HAP-1 (cell line): ENCODE measurements at regions of chr1 and their contacts with region 1.

Region 1: DNA sequence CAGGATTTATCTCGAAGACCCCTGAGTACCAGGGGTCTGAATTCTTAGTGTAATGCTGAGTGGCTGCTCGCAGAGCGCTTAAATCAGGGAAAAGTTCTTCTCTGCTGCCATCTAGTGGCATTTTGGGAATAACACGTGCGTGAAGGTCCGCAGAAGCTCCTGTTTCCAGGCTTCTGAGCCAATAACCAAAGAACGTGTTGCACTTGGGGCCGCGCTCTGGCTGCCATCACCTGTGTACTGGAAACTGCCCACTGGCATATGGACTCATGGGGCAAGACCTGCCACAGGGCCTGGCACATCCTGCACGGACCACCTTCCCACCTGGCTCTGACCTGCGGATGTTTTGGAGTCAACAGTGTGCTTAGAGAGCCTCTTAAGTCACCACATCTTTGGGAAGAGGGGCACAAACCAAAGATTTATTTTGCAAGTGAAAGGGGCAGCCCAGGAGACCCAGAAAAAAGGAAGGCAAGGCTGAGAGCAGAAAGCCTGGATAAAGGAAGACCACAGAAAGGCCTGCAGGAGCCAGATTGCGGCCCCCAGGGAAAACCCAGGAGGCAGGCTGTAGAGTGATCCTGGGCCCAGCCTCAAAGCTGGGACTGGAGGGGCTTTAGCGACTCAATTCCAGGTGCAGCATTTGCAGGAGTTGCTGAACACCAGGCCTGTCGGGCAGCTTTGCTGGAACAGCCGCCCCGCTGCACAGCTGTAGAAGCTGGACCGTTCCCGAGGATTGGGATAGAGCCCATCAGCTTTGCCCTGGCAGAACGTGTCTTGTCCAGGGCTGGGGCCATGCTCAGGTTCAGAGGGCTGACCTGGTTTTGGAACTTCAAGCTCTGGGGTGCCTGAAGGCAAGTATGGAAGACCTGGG is 13.0 kb downstream of the CHIT1 start:
- DNase-seq: peak; percentile 60 to 76
- H3K4me3 ChIP-seq: no peak overlapping the region
- H3K4me1 ChIP-seq: no peaks in the 10 kb centered on the region
- H3K27me3 ChIP-seq: peaks cover 20% of the 10 kb centered on the region; the same call in 1 of the 2 replicates

Region 2: GRCh38 chr1:202692959-202693555 is 523.4 kb before region 1 on chr1:
- in situ Hi-C with region 1: no loop called
- DNase-seq: peak; percentile 34 to 88
- H3K4me3 ChIP-seq: no peak overlapping the region
- H3K4me1 ChIP-seq: no peaks in the 10 kb centered on the region
- H3K27me3 ChIP-seq: peaks cover 7% of the 10 kb centered on the region

Region 3: GRCh38 chr1:202765721-202766120 is 450.8 kb before region 1 on chr1:
- in situ Hi-C with region 1: no loop called
- DNase-seq: no peak
- H3K4me3 ChIP-seq: no peak overlapping the region
- H3K4me1 ChIP-seq: no peaks in the 10 kb centered on the region
- H3K27me3 ChIP-seq: no peaks in the 10 kb centered on the region

Region 4: GRCh38 chr1:203038891-203039608 is 177.5 kb before region 1 on chr1:
- in situ Hi-C with region 1: loop called (anchors 5 kb)
- DNase-seq: peak; percentile 74 to 86
- H3K4me3 ChIP-seq: no peak overlapping the region
- H3K4me1 ChIP-seq: no peaks in the 10 kb centered on the region
- H3K27me3 ChIP-seq: no peaks in the 10 kb centered on the region

Region 5: DNA sequence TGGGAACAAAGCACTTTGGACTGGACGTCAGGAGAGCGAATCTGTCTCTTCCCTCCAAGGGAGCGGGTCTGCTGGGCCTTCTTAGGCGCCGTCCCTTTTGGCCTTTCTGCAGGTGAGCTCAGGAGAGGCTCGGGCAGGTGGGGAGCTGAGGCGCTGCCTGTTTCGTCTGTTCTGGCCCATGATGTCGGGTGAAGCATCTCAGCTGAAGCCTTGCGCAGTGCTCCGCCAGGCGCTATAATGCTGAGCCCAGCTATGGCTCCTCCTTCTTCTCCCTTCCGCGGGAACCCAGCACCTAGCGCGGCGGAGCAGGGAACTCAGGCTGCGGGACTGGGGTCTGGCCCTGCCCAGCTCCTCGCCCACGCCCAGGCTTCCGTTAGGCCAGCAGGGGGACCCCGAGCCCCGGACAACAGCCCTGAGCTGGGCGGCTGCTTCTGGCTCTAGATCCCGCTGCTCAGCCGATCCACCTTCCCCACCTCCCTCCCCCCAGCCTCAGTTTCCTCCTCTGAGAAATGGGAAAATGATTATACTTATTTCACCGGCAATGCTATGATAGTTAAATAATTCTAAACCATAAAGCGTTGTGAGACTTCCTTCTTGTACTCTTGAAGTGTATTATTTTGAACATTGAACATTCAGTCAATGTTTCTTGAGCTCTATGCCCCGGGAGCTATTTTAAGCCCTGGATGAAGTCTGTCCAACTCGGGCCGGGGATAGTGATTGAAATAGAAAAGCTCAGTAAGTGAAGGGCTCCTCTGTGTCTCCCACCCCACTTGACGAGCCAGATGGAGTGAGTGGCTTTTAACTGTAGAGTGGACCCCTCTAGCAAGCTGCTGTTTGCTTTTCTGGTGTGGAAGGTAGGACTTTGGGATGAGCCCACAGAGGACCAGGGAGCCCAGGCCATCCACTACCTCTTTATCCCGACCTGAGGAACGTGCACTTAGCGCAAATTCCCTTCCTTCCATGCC is 98.6 kb before region 1 on chr1:
- in situ Hi-C with region 1: loop called (anchors 5 kb)
- DNase-seq: peak; percentile 49 to 89
- H3K4me3 ChIP-seq: no peak overlapping the region
- H3K4me1 ChIP-seq: no peaks in the 10 kb centered on the region
- H3K27me3 ChIP-seq: peaks cover 36% of the 10 kb centered on the region

Region 6: DNA sequence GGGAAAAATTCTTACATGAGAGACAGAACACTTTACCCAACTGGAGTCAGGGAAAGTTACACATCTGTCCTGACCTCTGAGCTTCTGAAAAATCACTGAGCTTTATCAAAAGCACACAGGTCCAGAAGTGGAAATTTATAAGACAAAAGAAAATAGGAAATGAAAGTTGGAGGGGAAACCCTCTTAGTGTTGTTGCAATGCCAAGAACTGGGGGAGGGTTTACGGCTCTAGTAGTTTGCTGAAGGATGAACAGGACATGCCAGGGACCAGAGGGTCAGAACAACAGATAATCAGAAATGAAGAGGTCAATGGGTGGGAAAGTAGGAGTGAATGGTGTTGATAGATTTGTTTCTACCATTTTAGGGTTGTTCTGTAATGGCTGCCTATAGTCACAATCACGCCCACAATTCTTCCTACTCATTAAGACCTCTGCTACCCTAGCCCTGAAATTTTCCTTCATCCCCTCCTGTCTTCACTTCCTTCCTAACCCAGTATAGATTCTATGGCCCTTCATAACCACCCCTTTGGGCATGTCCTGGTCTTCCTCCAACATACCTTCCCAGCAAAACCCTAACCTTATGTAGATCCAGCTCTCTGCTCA is 164.7 kb after region 1 on chr1:
- in situ Hi-C with region 1: no loop called
- DNase-seq: no peak
- H3K4me3 ChIP-seq: no peak overlapping the region
- H3K4me1 ChIP-seq: no peaks in the 10 kb centered on the region
- H3K27me3 ChIP-seq: peaks cover 22% of the 10 kb centered on the region